Activated CD4-positive, alpha-beta memory T cell treated with anti-CD3 and anti-CD28 coated beads for 36 hours (primary cell): ENCODE measurements at regions of chr6 and their contacts with region 1.

Region 1: DNA sequence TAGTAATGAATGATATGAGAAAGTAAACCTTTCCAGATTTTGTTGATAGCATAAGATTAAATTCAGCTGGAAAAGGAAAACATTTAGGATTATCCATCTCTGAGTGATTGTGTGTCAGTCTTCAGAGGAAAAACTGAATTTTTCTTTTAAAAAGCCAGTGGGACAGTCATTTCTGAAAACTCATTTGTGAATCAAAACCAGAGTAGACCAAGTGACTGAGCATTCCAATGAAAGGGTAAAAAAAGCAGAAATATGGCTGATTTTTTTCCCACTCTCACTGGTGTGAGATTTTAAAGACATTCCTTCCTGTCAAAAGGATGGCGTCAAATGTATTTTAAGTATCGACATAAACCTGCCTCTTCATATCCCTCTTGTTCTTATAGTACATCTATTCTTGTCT is 214.0 kb downstream of the GMPR start:
- DNase-seq: no peak
- H3K4me3 Mint-ChIP-seq: no peak overlapping the region
- H3K27ac Mint-ChIP-seq: no peak overlapping the region
- H3K4me1 Mint-ChIP-seq: peaks cover 30% of the 10 kb centered on the region
- H3K27me3 Mint-ChIP-seq: no peaks in the 10 kb centered on the region

Region 2: DNA sequence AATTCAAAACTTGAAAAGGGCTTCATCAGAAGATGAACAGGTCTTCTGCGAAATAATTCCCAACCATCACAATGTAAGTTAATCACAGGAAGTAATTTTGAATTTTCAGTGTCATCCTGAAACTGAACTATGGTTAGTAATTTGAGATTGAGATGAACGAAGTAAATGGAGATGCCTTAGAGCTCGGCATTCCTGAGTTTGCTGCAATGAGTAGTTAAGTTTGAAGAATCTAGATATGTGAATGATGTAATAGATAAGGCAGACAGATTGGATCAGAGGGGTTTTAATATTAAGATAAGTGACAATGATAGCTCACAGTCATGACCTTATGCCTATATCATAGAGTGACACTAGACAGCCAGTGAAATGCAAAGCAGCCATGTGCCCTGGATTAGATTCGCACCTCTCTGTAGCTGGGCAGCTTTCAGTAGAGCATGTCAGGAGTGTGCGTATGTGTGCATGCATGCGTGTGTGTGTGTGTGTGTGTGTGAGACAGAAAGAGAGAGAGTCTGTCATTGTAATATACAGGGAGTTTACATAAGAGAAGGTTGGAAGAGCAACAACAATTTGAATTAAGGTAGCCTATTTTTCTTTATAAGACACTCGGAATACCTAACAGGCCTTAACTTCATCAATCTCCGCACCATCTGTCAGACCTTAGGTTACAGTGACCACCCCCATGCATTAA is 19.0 kb after region 1 on chr6:
- CTCF ChIA-PET with region 1: interaction called, 3 read pairs
- POLR2A ChIA-PET with region 1: interaction called, 3 read pairs
- intact Hi-C with region 1: loop called (anchors 1 kb)
- DNase-seq: no peak
- H3K4me3 Mint-ChIP-seq: no peak overlapping the region
- H3K27ac Mint-ChIP-seq: peak overlapping the region; percentile 69
- H3K4me1 Mint-ChIP-seq: peaks cover 88% of the 10 kb centered on the region
- H3K27me3 Mint-ChIP-seq: no peaks in the 10 kb centered on the region